MCF 10A (cell line): ENCODE measurements at regions of chr18 and their contacts with region 1.

Region 1: DNA sequence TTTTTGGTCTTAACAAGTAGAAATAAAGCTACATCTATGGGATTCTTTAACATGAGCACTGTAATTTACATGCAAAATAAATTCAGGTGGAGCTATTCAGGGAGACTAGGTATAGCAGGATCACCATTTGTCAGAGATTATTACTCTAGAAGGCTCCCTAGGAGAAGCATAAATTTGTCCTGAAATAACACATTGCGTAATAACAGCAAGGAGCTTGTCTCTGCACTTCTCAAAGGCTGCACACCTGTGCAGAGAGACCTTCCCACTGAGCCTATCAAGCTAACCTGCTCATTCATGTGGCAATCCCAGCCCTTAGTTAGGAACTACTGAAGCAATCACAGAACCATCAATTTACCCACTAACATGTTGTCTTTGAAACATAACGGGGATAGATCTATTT is 437.4 kb upstream of the MC4R start:
- DNase-seq: peak; percentile 29
- H3K4me3 Mint-ChIP-seq: no peak overlapping the region
- H3K27ac Mint-ChIP-seq: no peak overlapping the region
- H3K4me1 Mint-ChIP-seq: peaks cover 16% of the 10 kb centered on the region
- H3K27me3 Mint-ChIP-seq: peaks cover 18% of the 10 kb centered on the region
- CTCF ChIP-seq: no peak

Region 2: GRCh38 chr18:60485201-60485600 is 324.7 kb before region 1 on chr18:
- CTCF ChIA-PET with region 1: no interaction called
- POLR2A ChIA-PET with region 1: no interaction called
- intact Hi-C with region 1: no loop called
- DNase-seq: no peak
- H3K4me3 Mint-ChIP-seq: no peak overlapping the region
- H3K27ac Mint-ChIP-seq: no peak overlapping the region
- H3K4me1 Mint-ChIP-seq: no peaks in the 10 kb centered on the region
- H3K27me3 Mint-ChIP-seq: peaks cover 91% of the 10 kb centered on the region
- CTCF ChIP-seq: no peak

Region 3: DNA sequence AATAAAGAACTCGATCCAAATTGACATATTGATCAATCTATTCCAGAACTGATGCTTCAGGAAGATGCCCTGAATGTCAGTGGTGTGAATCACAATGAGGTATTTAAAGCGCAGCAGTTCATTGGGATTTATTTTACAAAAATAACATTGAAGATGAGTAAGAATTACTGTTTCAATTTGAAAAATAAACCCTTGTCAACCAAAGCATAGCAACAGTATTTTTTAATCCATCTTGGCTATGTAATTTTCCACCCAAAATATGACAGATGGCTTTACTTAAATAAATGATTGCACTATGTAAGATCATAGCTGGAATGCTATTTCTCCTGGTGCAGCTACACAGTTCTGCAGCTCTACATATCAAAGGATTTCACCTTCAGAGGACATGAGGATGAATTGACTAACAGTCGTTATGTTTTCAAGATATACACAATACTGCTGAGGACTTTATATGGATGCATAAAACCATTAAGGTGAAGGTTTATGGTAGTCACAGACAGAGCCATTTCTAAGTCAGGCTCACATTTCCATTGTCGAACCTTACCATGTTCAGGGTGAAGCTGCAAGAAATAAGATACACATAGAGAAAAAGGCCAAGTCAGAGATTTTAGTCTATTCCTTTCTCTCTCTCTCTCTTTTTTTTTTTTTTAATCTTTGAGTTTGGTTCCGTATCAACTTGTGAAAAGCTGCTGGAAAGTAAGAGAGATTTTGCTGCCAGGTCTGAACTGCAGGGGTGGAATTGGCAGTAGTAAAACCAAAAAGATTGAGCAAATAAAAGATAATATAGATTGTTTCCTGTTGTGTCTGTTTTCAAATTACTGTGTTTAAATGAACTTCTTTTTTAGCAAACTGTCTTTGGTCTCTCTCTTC is 125.3 kb after region 1 on chr18:
- CTCF ChIA-PET with region 1: no interaction called
- POLR2A ChIA-PET with region 1: no interaction called
- intact Hi-C with region 1: no loop called
- DNase-seq: no peak
- H3K4me3 Mint-ChIP-seq: no peak overlapping the region
- H3K27ac Mint-ChIP-seq: no peak overlapping the region
- H3K4me1 Mint-ChIP-seq: no peaks in the 10 kb centered on the region
- H3K27me3 Mint-ChIP-seq: no peaks in the 10 kb centered on the region
- CTCF ChIP-seq: no peak

Region 4: GRCh38 chr18:61064911-61065310 is 255.0 kb after region 1 on chr18:
- CTCF ChIA-PET with region 1: no interaction called
- POLR2A ChIA-PET with region 1: no interaction called
- intact Hi-C with region 1: loop called (anchors 5 kb)
- DNase-seq: no peak
- H3K4me3 Mint-ChIP-seq: no peak overlapping the region
- H3K27ac Mint-ChIP-seq: no peak overlapping the region
- H3K4me1 Mint-ChIP-seq: no peaks in the 10 kb centered on the region
- H3K27me3 Mint-ChIP-seq: no peaks in the 10 kb centered on the region
- CTCF ChIP-seq: no peak

Region 5: DNA sequence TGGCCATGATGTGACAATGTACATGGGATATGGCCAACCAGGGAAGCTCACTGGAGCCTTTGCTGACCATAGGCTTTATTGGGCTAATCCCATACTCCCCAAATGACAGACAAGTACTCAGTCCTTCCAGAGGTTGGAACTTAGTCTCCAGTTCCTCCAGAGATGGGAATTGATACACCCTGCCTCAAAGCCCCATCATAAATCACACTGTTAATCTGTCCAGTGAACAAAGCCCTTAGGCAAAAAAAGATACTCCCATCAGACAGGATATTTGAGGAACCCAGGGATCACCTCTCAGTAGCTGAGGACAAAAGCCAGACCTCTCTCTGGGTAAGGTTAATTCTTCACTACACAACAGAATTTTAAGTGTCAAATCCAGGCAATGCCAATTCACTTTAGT is 275.8 kb after region 1 on chr18:
- CTCF ChIA-PET with region 1: interaction called, 6 read pairs
- POLR2A ChIA-PET with region 1: interaction called, 3 read pairs
- intact Hi-C with region 1: loop called (anchors 5 kb)
- DNase-seq: no peak
- H3K4me3 Mint-ChIP-seq: no peak overlapping the region
- H3K27ac Mint-ChIP-seq: no peak overlapping the region
- H3K4me1 Mint-ChIP-seq: peaks cover 6% of the 10 kb centered on the region
- H3K27me3 Mint-ChIP-seq: no peaks in the 10 kb centered on the region
- CTCF ChIP-seq: no peak

Region 6: GRCh38 chr18:61248589-61248988 is 438.7 kb after region 1 on chr18:
- CTCF ChIA-PET with region 1: interaction called, 3 read pairs
- POLR2A ChIA-PET with region 1: no interaction called
- intact Hi-C with region 1: loop called (anchors 5 kb)
- DNase-seq: no peak
- H3K4me3 Mint-ChIP-seq: no peak overlapping the region
- H3K27ac Mint-ChIP-seq: no peak overlapping the region
- H3K4me1 Mint-ChIP-seq: no peaks in the 10 kb centered on the region
- H3K27me3 Mint-ChIP-seq: no peaks in the 10 kb centered on the region
- CTCF ChIP-seq: no peak